ENCODE measurements at regions of chr10 and their contacts with region 1.

Region 1: DNA sequence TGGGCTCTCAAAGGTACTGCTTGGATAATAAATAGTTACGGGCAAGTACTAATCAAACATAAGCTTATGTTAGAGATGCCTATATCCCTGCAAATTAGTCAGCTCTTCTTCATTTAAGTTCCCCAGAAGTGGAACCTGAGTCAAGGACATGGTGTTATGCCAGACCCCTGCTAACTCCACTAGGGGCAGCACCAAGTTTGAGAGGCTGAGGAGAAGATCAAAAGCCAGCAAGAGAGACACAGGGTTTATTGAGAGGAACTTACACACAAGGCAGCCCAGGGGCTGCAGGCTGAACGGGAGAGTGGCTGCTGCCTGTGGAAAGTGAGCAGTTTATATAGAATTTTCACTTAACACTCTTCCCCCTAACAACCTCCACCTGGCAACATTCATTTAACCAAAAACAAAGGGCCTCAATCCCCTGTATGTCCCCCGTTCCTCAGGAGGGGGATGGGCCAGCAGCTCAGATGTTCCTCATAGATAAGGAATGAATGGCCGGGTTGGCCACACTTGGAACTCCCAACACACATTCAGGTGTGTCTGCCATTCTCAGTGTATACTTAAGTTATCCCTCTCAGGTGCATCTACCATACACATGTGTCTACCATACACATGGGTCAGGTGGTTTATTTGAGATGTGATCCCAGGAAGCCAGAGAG is 62.6 kb upstream of the GHITM start:
- DNase-seq: no peak
- H3K4me3 ChIP-seq: no peak overlapping the region
- H3K27ac ChIP-seq: no peak overlapping the region
- H3K4me1 ChIP-seq: peaks cover 0 to 4% (median under 1%) of the 10 kb centered on the region in 4 experiments; a peak in 2 of 7 replicates
- H3K27me3 ChIP-seq: no peaks in the 10 kb centered on the region; a peak in 2 of 7 replicates
- CTCF ChIP-seq: peak; percentile 54 to 71 (median 54)
- EP300 ChIP-seq: no peak
- POLR2A ChIP-seq: no peak
- RAD21 ChIP-seq: peak in 1 of 2 experiments; percentile 29; a peak in 1 of 4 replicates

Region 2: DNA sequence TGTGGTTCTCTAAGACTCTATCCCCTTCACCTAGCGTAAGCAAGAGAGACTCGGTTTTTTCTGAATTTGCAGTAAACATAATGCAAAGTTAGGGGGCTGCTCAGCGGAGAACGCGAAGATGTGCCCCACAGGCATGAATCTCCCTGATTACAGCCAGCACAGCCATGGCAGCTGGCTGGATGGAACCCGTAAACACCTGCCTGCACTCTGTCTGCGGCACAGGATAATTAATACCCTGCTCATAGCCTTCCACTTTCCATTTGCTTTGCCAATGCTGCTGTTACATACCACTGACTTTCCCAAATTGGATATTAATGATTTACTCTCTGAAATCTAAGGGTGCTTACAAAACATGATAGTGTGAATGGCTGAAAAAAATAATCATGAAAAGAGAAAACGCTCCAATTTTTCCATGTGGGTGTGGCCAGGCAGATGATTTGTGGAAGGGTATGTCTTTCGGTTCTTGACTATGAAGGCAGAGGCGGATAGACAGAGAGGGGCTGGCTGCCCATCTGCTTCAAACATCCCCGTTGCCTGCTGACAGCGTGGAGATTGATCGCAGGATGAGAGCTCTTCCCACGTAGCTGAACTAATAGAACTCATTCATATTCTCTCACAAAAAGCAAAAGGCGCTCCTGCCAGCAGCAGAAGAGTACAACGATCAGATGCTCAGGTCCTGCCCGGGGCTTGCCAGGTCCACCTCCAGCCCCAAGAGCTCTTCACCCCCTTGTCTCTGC is 130.5 kb before region 1 on chr10:
- CTCF ChIA-PET with region 1: no interaction called
- POLR2A ChIA-PET with region 1: no interaction called
- DNase-seq: no peak
- H3K4me3 ChIP-seq: no peak overlapping the region
- H3K27ac ChIP-seq: no peak overlapping the region
- H3K4me1 ChIP-seq: peaks cover 0 to 5% (median 0%) of the 10 kb centered on the region in 4 experiments; a peak in 2 of 7 replicates
- H3K27me3 ChIP-seq: peaks cover 4 to 14% (median 6%) of the 10 kb centered on the region in 4 experiments; a peak in 5 of 7 replicates
- CTCF ChIP-seq: no peak
- EP300 ChIP-seq: no peak
- POLR2A ChIP-seq: no peak
- RAD21 ChIP-seq: no peak

Region 3: DNA sequence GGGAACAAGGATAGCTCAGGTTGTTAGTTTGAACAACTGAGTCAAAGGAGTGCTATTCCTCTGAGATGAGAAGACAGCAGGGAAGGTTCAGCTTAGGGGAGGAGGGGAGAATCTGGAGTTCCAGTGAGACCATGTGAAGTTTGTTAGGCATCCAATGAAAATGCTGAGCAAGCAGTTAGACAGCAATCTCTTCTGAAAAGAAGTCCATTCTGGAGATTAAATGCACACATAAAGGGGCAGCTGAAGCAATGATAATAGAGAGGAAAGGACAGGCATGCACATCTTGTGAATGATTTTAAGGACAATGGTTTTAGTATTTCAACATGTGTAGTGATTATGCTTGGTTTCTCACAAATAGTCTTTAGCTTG is 27.0 kb before region 1 on chr10:
- CTCF ChIA-PET with region 1: interaction called, 14 read pairs
- POLR2A ChIA-PET with region 1: no interaction called
- DNase-seq: no peak
- H3K4me3 ChIP-seq: no peak overlapping the region
- H3K27ac ChIP-seq: no peak overlapping the region
- H3K4me1 ChIP-seq: no peaks in the 10 kb centered on the region
- H3K27me3 ChIP-seq: no peaks in the 10 kb centered on the region
- CTCF ChIP-seq: no peak
- EP300 ChIP-seq: no peak
- POLR2A ChIP-seq: no peak
- RAD21 ChIP-seq: no peak

Region 4: GRCh38 chr10:84054743-84055142 is 21.9 kb before region 1 on chr10:
- CTCF ChIA-PET with region 1: interaction called, 82 read pairs
- POLR2A ChIA-PET with region 1: no interaction called
- DNase-seq: no peak
- H3K4me3 ChIP-seq: no peak overlapping the region
- H3K27ac ChIP-seq: no peak overlapping the region
- H3K4me1 ChIP-seq: peaks cover 0 to 4% (median 1%) of the 10 kb centered on the region in 4 experiments; a peak in 1 of 7 replicates
- H3K27me3 ChIP-seq: no peaks in the 10 kb centered on the region
- CTCF ChIP-seq: peak; percentile 41 to 53 (median 50)
- EP300 ChIP-seq: no peak
- POLR2A ChIP-seq: no peak
- RAD21 ChIP-seq: peak; percentile 31 to 35; a peak in 2 of 4 replicates

Region 5: GRCh38 chr10:84097787-84098353 is 21.2 kb after region 1 on chr10:
- CTCF ChIA-PET with region 1: interaction called, 13 read pairs
- POLR2A ChIA-PET with region 1: no interaction called
- DNase-seq: no peak
- H3K4me3 ChIP-seq: no peak overlapping the region
- H3K27ac ChIP-seq: no peak overlapping the region
- H3K4me1 ChIP-seq: no peaks in the 10 kb centered on the region
- H3K27me3 ChIP-seq: no peaks in the 10 kb centered on the region
- CTCF ChIP-seq: peak in 2 of 3 experiments; percentile 25 to 49; a peak in 2 of 4 replicates
- EP300 ChIP-seq: no peak
- POLR2A ChIP-seq: no peak
- RAD21 ChIP-seq: peak; percentile 53 to 67

Region 6: DNA sequence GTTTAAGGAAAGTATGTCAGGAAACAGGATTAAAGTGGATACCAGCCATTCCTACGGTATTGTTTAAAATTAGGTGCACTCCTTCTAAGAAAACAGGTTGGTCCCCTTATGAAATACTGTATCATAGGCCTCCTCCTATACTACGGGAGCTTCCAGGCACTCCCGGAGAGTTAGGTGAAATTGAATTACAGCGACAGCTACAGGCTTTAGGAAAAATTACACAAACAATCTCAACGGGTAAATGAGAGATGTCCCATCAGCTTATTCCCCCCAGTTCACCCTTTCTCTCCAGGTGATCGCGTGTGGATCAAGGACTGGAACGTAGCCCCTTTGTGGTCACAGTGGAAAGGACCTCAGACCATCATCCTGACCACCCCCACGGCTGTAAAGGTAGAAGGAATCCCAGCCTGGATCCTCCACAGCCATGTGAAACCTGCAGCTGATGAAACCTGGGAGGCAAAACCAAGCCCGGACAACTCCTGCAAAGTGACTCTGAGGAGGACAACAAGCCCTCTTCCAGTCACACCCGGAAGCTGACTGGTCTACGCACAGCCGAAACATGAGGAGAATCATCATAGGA is 37.5 kb after region 1 on chr10:
- CTCF ChIA-PET with region 1: interaction called, 20 read pairs
- POLR2A ChIA-PET with region 1: no interaction called
- DNase-seq: peak in 1 of 2 experiments; percentile 50
- H3K4me3 ChIP-seq: no peak overlapping the region
- H3K27ac ChIP-seq: no peak overlapping the region
- H3K4me1 ChIP-seq: no peaks in the 10 kb centered on the region
- H3K27me3 ChIP-seq: no peaks in the 10 kb centered on the region
- CTCF ChIP-seq: peak in 2 of 3 experiments; percentile 43 to 49; a peak in 3 of 4 replicates
- EP300 ChIP-seq: no peak
- POLR2A ChIP-seq: no peak
- RAD21 ChIP-seq: peak; percentile 33 to 47

Region 7: DNA sequence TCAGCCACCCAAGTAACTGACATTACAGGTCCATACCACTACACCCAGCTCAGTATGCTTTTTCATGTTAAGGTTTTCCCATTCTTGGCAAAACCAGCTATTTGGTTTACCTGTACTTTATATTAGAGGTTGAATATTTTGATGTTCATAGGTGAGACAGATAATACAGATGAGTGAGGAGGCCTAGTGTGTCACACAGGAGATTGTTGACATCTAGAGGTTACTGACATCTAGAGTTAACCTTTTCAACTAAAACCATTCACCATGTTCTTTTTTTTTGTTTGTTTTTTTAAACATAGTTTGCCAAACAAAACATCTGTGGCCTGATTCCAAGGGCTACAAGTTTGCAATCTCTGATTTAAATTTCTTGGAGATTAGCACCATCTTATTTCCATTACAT is 70.7 kb after region 1 on chr10:
- CTCF ChIA-PET with region 1: interaction called, 15 read pairs
- POLR2A ChIA-PET with region 1: no interaction called
- DNase-seq: no peak
- H3K4me3 ChIP-seq: no peak overlapping the region
- H3K27ac ChIP-seq: no peak overlapping the region
- H3K4me1 ChIP-seq: no peaks in the 10 kb centered on the region
- H3K27me3 ChIP-seq: no peaks in the 10 kb centered on the region
- CTCF ChIP-seq: no peak
- EP300 ChIP-seq: no peak
- POLR2A ChIP-seq: no peak
- RAD21 ChIP-seq: no peak

Region 8: GRCh38 chr10:84308481-84309304 is 232.0 kb after region 1 on chr10:
- CTCF ChIA-PET with region 1: no interaction called
- POLR2A ChIA-PET with region 1: no interaction called
- DNase-seq: no peak
- H3K4me3 ChIP-seq: no peak overlapping the region
- H3K27ac ChIP-seq: no peak overlapping the region
- H3K4me1 ChIP-seq: no peaks in the 10 kb centered on the region
- H3K27me3 ChIP-seq: no peaks in the 10 kb centered on the region
- CTCF ChIP-seq: no peak
- EP300 ChIP-seq: no peak
- POLR2A ChIP-seq: no peak
- RAD21 ChIP-seq: no peak

Measured in H1 (cell line).